Gastrocnemius medialis (tissue), 4 donors: ENCODE measurements at regions of chr22 and their contacts with region 1.

Region 1: GRCh38 chr22:37807410-37808293 is at the start of gene GCAT:
- DNase-seq: peak; percentile 95 to 97
- ATAC-seq: peak; percentile 79 to 83
- H3K4me3 ChIP-seq: peak within 1 kb of the TSS; percentile 76 to 87 (median 82)
- H3K27ac ChIP-seq: peak within 1 kb of the TSS; percentile 91 to 95 (median 94)
- H3K4me1 ChIP-seq: peaks cover 16 to 17% of the 10 kb centered on the region in 2 donors
- H3K27me3 ChIP-seq: no peaks in the 10 kb centered on the region
- CTCF ChIP-seq: no peak
- POLR2A ChIP-seq: peak; percentile 68 to 78
- total RNA-seq, gene GCAT: 10.0 to 21.5 (median 15.1) TPM

Region 2: GRCh38 chr22:37745548-37746365 is 61.9 kb before region 1 on chr22:
- in situ Hi-C with region 1: no loop called
- intact Hi-C with region 1: loop called (anchors 2 kb)
- DNase-seq: peak; percentile 87 to 89
- ATAC-seq: peak; percentile 86
- H3K4me3 ChIP-seq: peak overlapping the region; percentile 84 to 99 (median 96)
- H3K27ac ChIP-seq: peak overlapping the region; percentile 86 to 93 (median 88)
- H3K4me1 ChIP-seq: peaks cover 28 to 31% of the 10 kb centered on the region in 2 donors
- H3K27me3 ChIP-seq: no peaks in the 10 kb centered on the region
- CTCF ChIP-seq: no peak
- POLR2A ChIP-seq: peak; percentile 67 to 72

Region 3: DNA sequence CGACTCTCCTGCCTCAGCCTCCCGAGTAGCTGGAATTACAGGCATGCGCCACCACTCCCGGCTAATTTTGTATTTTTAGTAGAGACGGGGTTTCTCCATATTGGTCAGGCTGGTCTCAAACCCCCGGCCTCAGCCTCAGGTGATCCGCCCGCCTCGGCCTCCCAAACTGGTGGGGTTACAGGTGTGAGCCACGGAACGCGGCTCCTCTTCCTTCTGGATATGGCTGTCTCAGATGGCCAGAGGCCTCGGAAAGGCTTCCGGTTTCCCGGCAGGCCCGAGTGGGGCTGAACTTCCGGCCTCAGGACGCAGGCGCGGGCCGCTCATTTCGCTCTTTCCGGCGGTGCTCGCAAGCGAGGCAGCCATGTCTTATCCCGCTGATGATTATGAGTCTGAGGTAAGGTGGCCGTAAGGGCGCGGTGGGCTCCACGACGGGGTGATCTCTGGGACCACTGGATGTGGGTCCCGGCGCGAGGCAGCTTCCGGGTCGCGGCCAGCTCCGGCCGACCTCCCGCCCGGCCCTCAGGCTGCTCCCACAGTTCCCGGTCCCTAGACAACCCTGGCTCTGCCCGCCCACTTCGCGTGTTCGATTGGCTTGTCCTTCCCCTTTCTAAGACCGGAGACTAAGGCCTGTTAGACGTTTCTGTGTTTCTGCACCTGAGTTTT is 41.6 kb after region 1 on chr22 and contains the start of gene EIF3L:
- in situ Hi-C with region 1: no loop called
- intact Hi-C with region 1: loop called (anchors 1 kb)
- DNase-seq: peak; percentile 87
- ATAC-seq: peak; percentile 76 to 81
- H3K4me3 ChIP-seq: peak within 1 kb of the TSS; percentile 61 to 87 (median 86)
- H3K27ac ChIP-seq: peak within 1 kb of the TSS; percentile 84 to 93 (median 90)
- H3K4me1 ChIP-seq: peaks cover 15 to 18% of the 10 kb centered on the region in 2 donors
- H3K27me3 ChIP-seq: no peaks in the 10 kb centered on the region
- CTCF ChIP-seq: no peak
- POLR2A ChIP-seq: peak; percentile 88 to 92
- total RNA-seq, gene EIF3L: 291 to 406 (median 343) TPM

Region 4: DNA sequence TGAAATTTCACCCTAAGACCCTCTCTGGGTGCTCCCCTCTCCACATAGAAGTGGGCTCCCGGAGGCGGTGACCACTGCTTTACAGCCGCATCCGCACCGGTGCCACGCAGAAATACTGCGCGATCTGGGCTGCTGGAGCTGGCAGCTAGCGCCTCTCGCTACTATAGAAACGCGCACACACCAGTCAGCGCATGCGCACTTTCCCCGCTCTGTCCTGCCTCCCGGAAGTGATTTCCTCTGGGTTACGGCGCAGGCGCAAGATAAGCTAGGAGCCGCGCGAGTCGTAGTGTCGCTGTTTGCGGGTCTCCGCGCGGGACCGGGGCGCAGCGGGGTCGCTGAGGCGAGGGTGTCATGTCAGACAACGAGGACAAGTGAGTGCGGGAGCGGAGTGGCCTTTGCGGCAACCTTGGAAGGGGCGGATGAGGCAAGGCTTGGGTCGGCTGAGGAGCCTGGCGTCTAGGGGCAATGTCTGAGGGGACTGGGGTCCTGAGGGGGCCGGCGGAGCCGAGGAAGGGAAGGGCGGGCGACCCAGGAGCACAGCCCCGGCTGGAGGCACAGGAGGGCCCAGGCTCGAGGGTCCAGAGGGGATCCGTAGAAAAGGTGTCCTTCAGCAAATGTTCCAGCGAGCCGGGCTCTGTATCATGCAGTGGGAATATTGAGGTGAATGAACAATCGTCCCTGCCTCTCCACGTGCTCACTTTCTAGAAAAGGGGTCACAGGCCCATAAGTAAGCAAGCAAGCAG is 146.0 kb after region 1 on chr22 and contains the starts of genes C22orf23 and POLR2F:
- in situ Hi-C with region 1: loop called in 2 of 4 experiments (anchors 10 to 25 kb)
- intact Hi-C with region 1: no loop called
- DNase-seq: peak; percentile 89 to 93
- ATAC-seq: peak; percentile 97 to 99
- H3K4me3 ChIP-seq: peak within 1 kb of the TSS; percentile 76 to 100 (median 96)
- H3K27ac ChIP-seq: peak within 1 kb of the TSS; percentile 77 to 91 (median 90)
- H3K4me1 ChIP-seq: peaks cover 18 to 31% of the 10 kb centered on the region in 2 donors
- H3K27me3 ChIP-seq: no peaks in the 10 kb centered on the region
- CTCF ChIP-seq: no peak
- POLR2A ChIP-seq: peak; percentile 67 to 81
- total RNA-seq, gene C22orf23: 0.20 to 1.1 (median 0.35) TPM in 3 of 4 donors, not detected in the other
- total RNA-seq, gene POLR2F: 84.1 to 152 (median 134) TPM

Region 5: DNA sequence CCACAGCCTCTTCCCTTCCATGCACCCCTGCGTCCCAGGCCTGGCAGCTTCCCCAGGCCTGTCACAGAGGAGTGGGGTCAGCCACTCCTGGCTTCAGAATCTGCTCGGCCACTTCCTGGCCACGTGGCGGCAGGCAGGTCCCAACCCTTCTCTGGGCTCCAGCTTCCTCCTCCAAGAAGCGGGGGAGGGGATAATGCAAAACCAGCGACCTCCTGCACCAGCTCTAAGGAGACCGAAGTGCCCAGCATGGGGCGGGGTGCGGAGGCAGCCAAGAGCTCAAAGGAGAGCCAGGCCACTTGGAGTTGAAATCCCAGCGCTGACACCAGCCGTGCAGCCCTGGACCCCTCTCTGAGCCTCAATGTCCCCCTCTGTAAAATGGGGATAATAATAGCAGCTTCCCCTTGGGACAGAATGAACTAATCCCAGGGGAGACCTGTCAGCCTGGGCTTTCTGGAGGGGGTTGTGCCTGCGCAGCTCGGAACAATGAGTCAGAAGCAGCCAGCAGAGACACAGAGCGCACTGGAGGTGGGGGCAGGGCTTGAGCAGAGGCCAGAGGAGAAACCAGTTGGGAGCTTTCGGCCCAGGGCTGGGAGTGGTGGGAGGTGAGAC is 226.7 kb after region 1 on chr22:
- in situ Hi-C with region 1: no loop called
- intact Hi-C with region 1: no loop called
- DNase-seq: peak in 1 of 2 donors; percentile 40
- ATAC-seq: peak; percentile 46 to 57
- H3K4me3 ChIP-seq: no peak overlapping the region
- H3K27ac ChIP-seq: peak overlapping the region; percentile 10 to 57 (median 42)
- H3K4me1 ChIP-seq: peaks cover 8 to 16% of the 10 kb centered on the region in 2 donors
- H3K27me3 ChIP-seq: no peaks in the 10 kb centered on the region
- CTCF ChIP-seq: no peak
- POLR2A ChIP-seq: no peak